ENCODE measurements at regions of chr20 and their contacts with region 1.

Region 1: DNA sequence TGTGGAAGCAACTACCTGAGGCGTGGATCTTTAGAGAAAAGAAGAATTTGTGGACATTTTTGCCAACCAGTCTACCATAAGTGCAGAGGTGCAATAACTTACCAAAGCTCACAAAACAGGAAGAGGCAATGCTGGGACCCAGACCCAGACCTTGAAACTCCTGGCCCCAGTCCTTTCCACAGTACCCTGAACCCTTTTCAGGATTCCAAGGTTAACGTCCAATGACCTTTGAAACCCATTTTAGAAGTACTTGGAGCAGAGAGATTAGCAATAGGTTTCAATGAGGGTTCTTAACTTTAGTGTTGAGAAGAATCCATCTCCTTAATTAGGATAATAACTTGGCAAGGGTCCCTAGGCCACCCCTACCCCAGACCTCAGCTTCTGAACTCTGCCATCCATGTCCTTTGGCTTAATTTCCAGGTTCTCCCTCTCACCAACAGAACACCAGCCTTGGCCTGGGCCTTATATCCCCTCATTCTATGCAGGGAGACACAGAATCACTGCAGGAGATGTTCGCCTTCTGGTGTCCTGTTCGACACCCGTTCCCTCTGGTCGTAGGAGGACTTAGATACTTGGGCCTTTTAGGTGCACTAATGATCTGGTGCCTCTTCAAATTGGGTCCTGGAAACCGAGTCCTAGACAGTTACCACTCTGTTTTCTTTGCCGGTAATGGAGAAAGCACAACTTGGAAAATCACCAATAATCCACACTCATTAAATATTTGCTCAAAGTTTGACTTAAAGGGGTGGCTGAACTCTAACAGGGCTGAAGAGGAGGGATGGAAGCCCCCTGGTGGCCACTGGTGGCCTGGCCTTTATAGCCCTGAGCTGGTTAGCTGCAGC is 40.6 kb downstream of the ISM1 start:
- DNase-seq: peak; percentile 65
- ATAC-seq: peak; percentile 63

Region 2: GRCh38 chr20:12970372-12970821 is 291.3 kb before region 1 on chr20:
- intact Hi-C with region 1: loop called (anchors 5 kb)
- DNase-seq: no peak
- ATAC-seq: peak; percentile 31

Region 3: GRCh38 chr20:13221673-13222318 is 39.9 kb before region 1 on chr20:
- intact Hi-C with region 1: loop called (anchors 5 kb)
- DNase-seq: peak; percentile 53
- ATAC-seq: peak; percentile 80